Prostate gland (tissue), 2 donors: ENCODE measurements at regions of chr1 and their contacts with region 1.

Region 1: DNA sequence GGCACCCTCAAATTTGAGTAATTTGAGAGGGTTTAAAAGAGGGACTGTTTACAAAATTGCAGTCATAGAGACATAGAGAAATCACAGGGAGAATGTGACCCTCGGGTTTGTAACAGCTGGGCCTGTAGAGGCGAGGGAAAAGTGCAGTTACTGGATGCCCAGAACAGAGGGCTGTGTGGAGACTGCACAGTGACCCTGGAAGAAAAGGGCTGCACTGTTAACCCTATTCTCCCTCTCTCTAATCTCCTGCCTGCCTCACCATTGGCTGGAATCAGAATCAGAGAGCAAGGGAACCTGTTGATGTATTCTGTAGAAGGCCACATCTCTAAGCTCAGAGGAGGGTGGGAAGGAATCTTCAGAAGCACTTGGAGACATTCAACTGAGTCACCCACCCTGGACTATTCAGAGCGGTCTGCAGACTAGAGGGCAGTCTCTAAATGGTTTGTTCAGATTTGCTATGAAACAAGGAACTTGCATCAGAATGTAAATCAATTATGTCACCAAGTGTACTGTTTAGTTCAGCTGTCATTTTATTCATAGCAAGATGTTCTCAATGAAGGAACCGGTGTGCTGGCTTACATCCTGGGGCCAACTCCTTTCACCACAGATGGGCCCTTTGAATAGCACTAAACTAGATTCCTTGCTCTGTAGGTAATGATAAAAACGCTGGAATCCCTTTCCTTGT is 132.2 kb upstream of the HOOK1 start:
- DNase-seq: no peak
- H3K4me3 ChIP-seq: no peak overlapping the region
- H3K27ac ChIP-seq: peak overlapping the region; percentile 50 to 52
- H3K4me1 ChIP-seq: no peaks in the 10 kb centered on the region
- H3K27me3 ChIP-seq: no peaks in the 10 kb centered on the region
- CTCF ChIP-seq: no peak
- POLR2A ChIP-seq: no peak

Region 2: DNA sequence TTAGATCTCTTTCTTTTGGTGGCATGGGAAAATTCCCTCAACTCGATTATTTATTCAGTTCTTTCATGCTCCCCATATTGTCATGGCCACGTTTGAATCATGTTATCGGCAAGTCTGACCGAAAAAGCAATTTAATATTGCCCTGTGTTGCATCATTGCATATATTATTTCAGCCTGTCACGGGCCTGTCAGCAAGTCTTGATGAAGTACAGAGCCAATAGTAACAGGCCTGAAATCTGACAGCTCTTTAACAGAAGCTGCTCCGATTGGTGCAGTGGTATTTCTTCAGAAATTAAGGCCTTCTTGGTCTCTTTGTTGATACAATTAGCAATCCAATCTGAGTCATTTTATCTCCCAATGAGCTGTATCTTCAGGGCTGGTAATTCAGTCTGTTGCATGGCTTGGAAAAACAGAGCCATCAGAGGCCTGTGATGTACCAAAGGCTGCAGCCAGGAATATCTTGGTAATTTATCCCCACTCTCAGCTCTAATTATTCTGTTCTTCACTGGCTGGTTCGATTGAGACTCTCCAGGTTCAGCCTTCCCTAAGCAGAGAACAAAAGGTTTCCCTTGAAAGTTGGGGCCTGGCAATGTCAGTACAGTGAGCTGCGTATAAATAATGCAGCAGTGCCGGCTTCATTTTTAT is 236.2 kb before region 1 on chr1:
- intact Hi-C with region 1: loop called (anchors 5 kb)
- DNase-seq: no peak
- H3K4me3 ChIP-seq: no peak overlapping the region
- H3K27ac ChIP-seq: peak overlapping the region in 1 of 2 donors; percentile 1
- H3K4me1 ChIP-seq: no peaks in the 10 kb centered on the region
- H3K27me3 ChIP-seq: no peaks in the 10 kb centered on the region
- CTCF ChIP-seq: no peak
- POLR2A ChIP-seq: no peak

Region 3: DNA sequence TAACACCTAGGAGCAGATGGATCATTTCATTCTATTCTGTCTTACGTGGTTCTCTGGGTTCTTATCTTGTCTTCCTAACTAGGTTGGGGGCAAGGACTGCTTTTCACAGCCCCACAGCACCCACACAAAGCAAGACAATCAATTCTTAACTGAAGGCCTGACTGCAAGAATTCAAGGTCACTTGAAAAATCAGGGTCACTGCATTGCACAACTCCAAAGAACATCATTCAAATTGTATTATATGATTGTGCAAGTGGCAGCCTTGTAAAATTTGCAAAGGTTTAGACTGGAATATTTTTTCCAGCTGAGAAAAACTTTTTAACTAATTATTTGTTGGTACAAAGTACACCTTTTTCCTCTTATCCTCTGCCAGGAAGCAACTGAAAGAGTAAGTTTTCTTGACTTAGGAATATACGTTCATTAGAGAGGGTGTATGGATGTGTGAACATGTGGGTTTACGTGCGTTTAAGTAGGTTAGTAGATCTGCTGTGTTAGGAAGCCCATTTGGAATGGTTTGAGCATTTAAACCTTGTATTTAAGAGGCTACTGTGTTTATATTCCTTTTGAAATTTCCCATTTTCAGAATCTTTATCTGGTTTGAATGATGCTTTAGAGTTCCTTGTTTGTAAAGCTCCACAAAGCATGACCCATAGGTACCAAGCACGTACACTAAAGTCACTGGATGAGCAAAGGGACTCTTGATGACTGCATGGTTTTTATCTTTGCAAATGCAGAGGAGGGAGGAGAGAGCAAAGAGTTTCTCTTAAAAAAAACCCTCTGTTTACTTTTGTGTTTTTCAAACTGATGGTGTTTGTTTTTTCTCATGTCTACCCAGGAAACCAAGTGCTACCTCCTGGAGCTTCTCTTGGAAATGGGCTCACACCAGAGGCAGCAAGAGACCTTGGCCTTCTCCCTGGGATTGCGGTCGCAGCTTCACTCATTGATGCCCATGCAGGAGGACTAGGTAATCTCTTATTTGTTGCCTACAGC is 170.8 kb before region 1 on chr1:
- intact Hi-C with region 1: loop called (anchors 10 kb)
- DNase-seq: no peak
- H3K4me3 ChIP-seq: no peak overlapping the region
- H3K27ac ChIP-seq: no peak overlapping the region
- H3K4me1 ChIP-seq: no peaks in the 10 kb centered on the region
- H3K27me3 ChIP-seq: no peaks in the 10 kb centered on the region
- CTCF ChIP-seq: no peak
- POLR2A ChIP-seq: no peak

Region 4: GRCh38 chr1:59596441-59596861 is 86.1 kb before region 1 on chr1:
- intact Hi-C with region 1: loop called (anchors 5 kb)
- DNase-seq: peak; percentile 27
- H3K4me3 ChIP-seq: no peak overlapping the region
- H3K27ac ChIP-seq: peak overlapping the region; percentile 66 to 71
- H3K4me1 ChIP-seq: peaks cover 22% of the 10 kb centered on the region
- H3K27me3 ChIP-seq: no peaks in the 10 kb centered on the region
- CTCF ChIP-seq: no peak
- POLR2A ChIP-seq: no peak